Colonic mucosa (tissue), 4 donors: ENCODE measurements at regions of chr14 and their contacts with region 1.

Region 1: GRCh38 chr14:55270832-55271565 is at the start of gene FBXO34:
- DNase-seq: peak; percentile 100
- H3K4me3 ChIP-seq: peak within 1 kb of the TSS; percentile 96
- H3K27ac ChIP-seq: peak within 1 kb of the TSS; percentile 89
- H3K4me1 ChIP-seq: peaks cover 8% of the 10 kb centered on the region
- H3K27me3 ChIP-seq: no peaks in the 10 kb centered on the region
- CTCF ChIP-seq: peak; percentile 97
- total RNA-seq, gene FBXO34: 39.8 to 70.9 TPM

Region 2: GRCh38 chr14:55354500-55354899 is 83.5 kb after region 1 on chr14:
- intact Hi-C with region 1: loop called (anchors 5 kb)
- DNase-seq: peak; percentile 74
- H3K4me3 ChIP-seq: no peak overlapping the region
- H3K27ac ChIP-seq: peak overlapping the region; percentile 37
- H3K4me1 ChIP-seq: peaks cover 5% of the 10 kb centered on the region
- H3K27me3 ChIP-seq: no peaks in the 10 kb centered on the region
- CTCF ChIP-seq: peak; percentile 52

Region 3: GRCh38 chr14:55416866-55417265 is 145.9 kb after region 1 on chr14:
- intact Hi-C with region 1: loop called (anchors 5 kb)
- DNase-seq: no peak
- H3K4me3 ChIP-seq: no peak overlapping the region
- H3K27ac ChIP-seq: no peak overlapping the region
- H3K4me1 ChIP-seq: no peaks in the 10 kb centered on the region
- H3K27me3 ChIP-seq: no peaks in the 10 kb centered on the region
- CTCF ChIP-seq: peak; percentile 24